ENCODE measurements at regions of chr5 and their contacts with region 1.

Region 1: GRCh38 chr5:76805850-76806505 is 12.9 kb upstream of the F2RL1 start:
- DNase-seq: peak; percentile 91
- H3K4me3 ChIP-seq: peak overlapping the region; percentile 12; the same call in 1 of the 2 replicates
- CTCF ChIP-seq: no peak

Region 2: DNA sequence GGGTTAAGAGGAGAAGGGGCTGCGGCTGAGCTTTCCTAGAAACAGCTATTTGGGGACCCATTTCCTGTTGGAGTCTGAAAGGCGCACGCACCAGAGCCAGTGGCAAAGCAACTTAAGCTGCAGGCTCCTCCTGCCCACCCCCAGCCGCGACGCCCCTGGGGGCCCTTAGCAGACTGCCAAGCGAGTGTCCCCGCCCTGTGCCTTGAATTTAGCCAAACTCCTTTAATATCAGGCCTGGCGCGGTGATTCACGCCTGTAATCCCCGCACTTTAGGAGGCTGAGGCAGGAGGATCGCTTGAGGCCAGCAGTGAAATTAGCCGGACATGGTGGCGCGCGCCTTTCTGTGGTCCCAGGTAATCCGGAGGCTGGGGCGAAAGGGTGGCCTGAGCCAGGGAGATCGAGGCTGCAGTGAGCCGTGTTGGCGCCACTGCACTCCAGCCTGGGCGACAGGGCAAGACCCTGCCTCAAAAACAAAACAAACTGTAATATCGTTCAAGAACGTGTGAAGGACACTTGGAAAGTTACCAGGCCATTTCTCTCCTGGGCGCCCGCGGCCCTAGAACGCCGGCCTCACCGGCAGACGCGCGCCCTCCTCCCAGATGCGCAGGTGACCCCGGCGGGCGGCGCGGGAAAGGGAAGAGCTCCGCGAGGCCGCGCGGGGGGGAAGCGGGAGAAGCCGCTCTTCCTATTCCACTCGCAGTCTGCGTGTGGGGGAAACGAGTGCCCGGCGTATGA is 91.1 kb before region 1 on chr5:
- CTCF ChIA-PET with region 1: no interaction called
- POLR2A ChIA-PET with region 1: no interaction called
- DNase-seq: no peak
- H3K4me3 ChIP-seq: peak overlapping the region; percentile 87
- CTCF ChIP-seq: no peak

Region 3: GRCh38 chr5:76790632-76791290 is 15.2 kb before region 1 on chr5:
- CTCF ChIA-PET with region 1: interaction called, 4 read pairs
- POLR2A ChIA-PET with region 1: interaction called, 16 read pairs
- DNase-seq: peak; percentile 91
- H3K4me3 ChIP-seq: no peak overlapping the region
- CTCF ChIP-seq: no peak

Region 4: DNA sequence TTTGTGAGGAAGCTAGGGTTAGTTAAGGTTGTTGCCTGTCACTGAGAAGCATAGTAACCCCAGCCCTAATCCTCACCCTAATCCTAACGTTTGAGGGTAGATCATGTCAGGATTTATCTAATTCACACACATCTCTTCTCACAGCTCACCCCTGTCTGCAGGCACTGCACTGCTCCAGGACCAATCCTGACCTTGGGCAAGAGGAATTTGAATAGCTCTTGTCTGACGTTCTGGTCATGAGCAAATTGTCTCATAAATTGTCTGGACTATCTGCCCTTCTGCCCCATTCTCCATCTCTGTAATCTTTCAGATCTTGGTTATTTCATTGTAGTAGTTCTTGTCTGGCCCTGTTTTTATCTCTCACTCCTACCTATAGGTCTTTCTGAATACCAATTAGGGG is 165.5 kb after region 1 on chr5:
- CTCF ChIA-PET with region 1: no interaction called
- POLR2A ChIA-PET with region 1: no interaction called
- DNase-seq: no peak
- H3K4me3 ChIP-seq: no peak overlapping the region
- CTCF ChIP-seq: no peak